Panc1 (cell line): ENCODE measurements at regions of chr15 and their contacts with region 1.

Region 1: GRCh38 chr15:42130246-42130986 is 26.0 kb downstream of the PLA2G4F start:
- DNase-seq: no peak
- ATAC-seq: no peak
- H3K4me3 ChIP-seq: no peak overlapping the region
- H3K27ac ChIP-seq: no peak overlapping the region
- H3K4me1 ChIP-seq: no peaks in the 10 kb centered on the region
- H3K27me3 ChIP-seq: peaks cover 7% of the 10 kb centered on the region
- CTCF ChIP-seq: no peak

Region 2: GRCh38 chr15:42035435-42035761 is 95.0 kb before region 1 on chr15:
- CTCF ChIA-PET with region 1: no interaction called
- POLR2A ChIA-PET with region 1: no interaction called
- in situ Hi-C with region 1: no loop called
- intact Hi-C with region 1: no loop called
- DNase-seq: no peak
- ATAC-seq: no peak
- H3K4me3 ChIP-seq: no peak overlapping the region
- H3K27ac ChIP-seq: no peak overlapping the region
- H3K4me1 ChIP-seq: no peaks in the 10 kb centered on the region
- H3K27me3 ChIP-seq: no peaks in the 10 kb centered on the region
- CTCF ChIP-seq: no peak

Region 3: DNA sequence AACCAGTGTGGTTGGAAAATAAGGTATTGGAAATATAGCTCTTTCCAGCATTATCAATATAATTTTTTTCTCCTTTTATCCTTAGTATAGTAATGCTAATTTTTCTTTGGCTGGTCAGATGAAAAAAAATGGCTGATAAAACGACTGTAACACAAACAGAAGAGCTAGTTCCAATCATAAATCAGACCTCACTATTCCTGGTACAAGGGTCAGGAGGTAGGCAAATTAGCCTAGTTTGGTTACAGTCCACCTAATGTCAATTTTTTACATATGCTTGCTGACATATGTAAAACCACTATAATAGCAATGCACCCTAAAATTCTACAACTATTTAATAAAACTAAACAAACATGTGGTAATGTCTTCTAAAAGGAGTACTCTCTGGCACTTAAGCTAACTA is 97.6 kb after region 1 on chr15:
- CTCF ChIA-PET with region 1: no interaction called
- POLR2A ChIA-PET with region 1: interaction called, 15 read pairs
- in situ Hi-C with region 1: no loop called
- intact Hi-C with region 1: no loop called
- DNase-seq: no peak
- ATAC-seq: no peak
- H3K4me3 ChIP-seq: no peak overlapping the region
- H3K27ac ChIP-seq: no peak overlapping the region
- H3K4me1 ChIP-seq: no peaks in the 10 kb centered on the region
- H3K27me3 ChIP-seq: no peaks in the 10 kb centered on the region
- CTCF ChIP-seq: no peak

Region 4: GRCh38 chr15:42608110-42608531 is 477.7 kb after region 1 on chr15:
- CTCF ChIA-PET with region 1: no interaction called
- POLR2A ChIA-PET with region 1: no interaction called
- in situ Hi-C with region 1: no loop called
- intact Hi-C with region 1: no loop called
- DNase-seq: no peak
- ATAC-seq: no peak; the same call in 1 of the 2 replicates
- H3K4me3 ChIP-seq: no peak overlapping the region
- H3K27ac ChIP-seq: no peak overlapping the region
- H3K4me1 ChIP-seq: no peaks in the 10 kb centered on the region
- H3K27me3 ChIP-seq: no peaks in the 10 kb centered on the region
- CTCF ChIP-seq: no peak